ENCODE measurements at regions of chr14 and their contacts with region 1.

Region 1: GRCh38 chr14:92783816-92784431 is 10.2 kb upstream of the GOLGA5 start:
- DNase-seq: peak in 1 of 2 donors; percentile 44
- ATAC-seq: peak in 7 of 8 donors; percentile 35 to 78 (median 68)
- H3K4me3 ChIP-seq: no peak overlapping the region
- H3K27ac ChIP-seq: no peak overlapping the region
- H3K4me1 ChIP-seq: peaks cover 0 to 38% (median 12%) of the 10 kb centered on the region in 9 donors
- H3K27me3 ChIP-seq: no peaks in the 10 kb centered on the region
- CTCF ChIP-seq: peak; percentile 38 to 73 (median 58)

Region 2: DNA sequence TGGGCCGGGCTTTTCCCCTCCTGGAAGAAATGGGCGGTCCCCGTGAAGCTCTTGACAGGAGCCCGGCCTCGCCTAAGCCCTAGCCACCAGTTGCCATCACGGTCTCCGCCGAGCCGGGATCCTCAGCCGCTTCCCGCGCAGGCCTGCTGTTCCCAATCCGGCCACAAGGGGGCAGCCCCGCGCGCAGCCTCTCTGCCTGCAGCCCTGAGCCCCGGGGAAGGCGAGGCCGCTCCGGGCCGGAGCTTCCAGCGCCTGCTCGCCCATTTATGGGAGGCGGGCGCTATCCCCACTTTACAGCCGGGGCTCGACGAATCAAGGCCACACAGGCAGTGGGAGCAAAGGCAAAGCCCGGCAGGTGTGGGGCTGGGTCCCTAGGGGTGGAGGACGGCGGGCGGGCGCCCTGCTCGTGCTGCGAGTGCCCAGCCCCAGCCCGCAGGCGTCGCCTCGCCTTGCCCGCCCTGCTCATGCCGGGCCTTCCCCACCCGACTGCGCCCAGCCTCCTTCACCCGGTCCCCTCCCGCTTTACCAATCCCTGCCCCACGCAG is 97.0 kb before region 1 on chr14:
- intact Hi-C with region 1: loop called in 3 of 10 experiments (anchors 1 to 10 kb)
- DNase-seq: peak; percentile 66 to 81
- ATAC-seq: peak; percentile 79 to 90 (median 86)
- H3K4me3 ChIP-seq: peak overlapping the region in 9 of 10 donors; percentile 32 to 56 (median 47)
- H3K27ac ChIP-seq: no peak overlapping the region
- H3K4me1 ChIP-seq: peaks cover under 1 to 19% (median 7%) of the 10 kb centered on the region in 9 donors
- H3K27me3 ChIP-seq: no peaks in the 10 kb centered on the region
- CTCF ChIP-seq: peak; percentile 68 to 100 (median 98)

Region 3: DNA sequence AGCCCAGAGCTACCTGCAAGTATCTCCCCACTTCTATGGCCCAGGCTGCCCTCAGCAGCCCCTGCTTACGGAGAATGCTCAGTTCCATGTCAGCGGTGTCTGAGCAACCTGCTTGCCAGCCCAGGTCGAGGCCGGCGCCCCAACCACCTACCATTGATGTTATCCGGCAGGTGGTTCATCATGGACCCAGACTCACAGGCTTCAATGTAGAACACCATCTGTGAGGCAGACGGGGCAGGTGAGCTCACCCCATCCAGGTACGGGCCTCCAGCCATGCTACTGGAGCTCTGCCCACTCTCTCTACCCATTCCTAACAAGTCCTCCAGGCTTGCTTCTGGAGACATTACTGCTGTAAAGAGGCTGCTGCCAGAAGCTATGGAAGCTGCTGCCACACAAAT is 71.3 kb before region 1 on chr14:
- intact Hi-C with region 1: loop called (anchors 1 to 5 kb)
- DNase-seq: no peak
- ATAC-seq: no peak
- H3K4me3 ChIP-seq: no peak overlapping the region
- H3K27ac ChIP-seq: no peak overlapping the region
- H3K4me1 ChIP-seq: peaks cover 0 to 8% (median 2%) of the 10 kb centered on the region in 9 donors
- H3K27me3 ChIP-seq: no peaks in the 10 kb centered on the region
- CTCF ChIP-seq: no peak

Region 4: GRCh38 chr14:92719890-92720323 is 64.0 kb before region 1 on chr14:
- intact Hi-C with region 1: loop called in 3 of 10 experiments (anchors 2 kb)
- DNase-seq: no peak
- ATAC-seq: peak in 1 of 8 donors; percentile 53
- H3K4me3 ChIP-seq: no peak overlapping the region
- H3K27ac ChIP-seq: peak overlapping the region in 6 of 10 donors; percentile 3 to 44 (median 18)
- H3K4me1 ChIP-seq: peaks cover 0 to 41% (median 27%) of the 10 kb centered on the region in 9 donors
- H3K27me3 ChIP-seq: no peaks in the 10 kb centered on the region
- CTCF ChIP-seq: no peak

Region 5: DNA sequence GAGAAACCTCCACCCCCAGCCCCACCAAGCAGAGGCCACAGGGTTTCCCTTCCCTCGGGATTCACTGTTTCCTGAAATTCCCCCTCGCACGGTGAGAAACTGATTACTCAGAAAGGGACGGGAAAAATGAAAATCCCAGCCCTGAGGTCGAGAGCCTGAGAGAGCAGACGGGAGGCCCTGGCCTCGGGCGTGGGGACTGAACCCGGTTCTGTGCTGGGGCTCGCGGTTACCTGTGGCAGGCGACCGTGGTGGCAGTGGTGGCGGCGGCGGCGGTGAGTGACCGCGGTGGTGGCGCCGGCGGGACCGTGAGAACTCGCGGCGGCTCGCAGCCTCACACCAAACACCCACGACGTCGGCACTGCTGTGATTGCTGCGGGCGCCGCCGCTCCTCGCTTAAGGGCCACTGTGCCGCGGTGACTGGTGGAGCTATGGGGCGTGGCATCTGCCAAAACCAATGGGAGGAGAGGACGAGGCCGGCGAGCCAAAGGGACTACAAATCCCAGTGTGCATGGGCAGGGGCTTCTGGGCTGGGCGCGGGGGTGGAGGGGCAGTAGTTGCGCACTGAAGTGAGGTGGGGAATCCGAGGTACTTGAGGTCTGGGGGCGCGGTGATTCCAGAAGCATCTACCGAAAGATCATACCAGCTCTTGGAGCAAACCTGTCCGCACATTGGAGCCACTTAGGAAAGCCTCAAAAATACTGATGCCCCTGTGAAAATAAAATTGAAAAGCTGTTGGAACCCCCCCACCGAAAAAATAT is 35.5 kb before region 1 on chr14 and contains the start of gene LGMN:
- intact Hi-C with region 1: loop called in 1 of 10 experiments (anchors 5 kb)
- DNase-seq: peak; percentile 96 to 98
- ATAC-seq: peak; percentile 97 to 99 (median 98)
- H3K4me3 ChIP-seq: peak within 1 kb of the TSS; percentile 67 to 95 (median 76)
- H3K27ac ChIP-seq: peak within 1 kb of the TSS; percentile 26 to 92 (median 90)
- H3K4me1 ChIP-seq: peaks cover 10 to 69% (median 19%) of the 10 kb centered on the region in 9 donors
- H3K27me3 ChIP-seq: peaks cover 0 to 26% (median 0%) of the 10 kb centered on the region in 7 donors
- CTCF ChIP-seq: peak in 1 of 9 donors; percentile 6
- total RNA-seq, gene LGMN: 82.2 to 211 (median 103) TPM

Region 6: DNA sequence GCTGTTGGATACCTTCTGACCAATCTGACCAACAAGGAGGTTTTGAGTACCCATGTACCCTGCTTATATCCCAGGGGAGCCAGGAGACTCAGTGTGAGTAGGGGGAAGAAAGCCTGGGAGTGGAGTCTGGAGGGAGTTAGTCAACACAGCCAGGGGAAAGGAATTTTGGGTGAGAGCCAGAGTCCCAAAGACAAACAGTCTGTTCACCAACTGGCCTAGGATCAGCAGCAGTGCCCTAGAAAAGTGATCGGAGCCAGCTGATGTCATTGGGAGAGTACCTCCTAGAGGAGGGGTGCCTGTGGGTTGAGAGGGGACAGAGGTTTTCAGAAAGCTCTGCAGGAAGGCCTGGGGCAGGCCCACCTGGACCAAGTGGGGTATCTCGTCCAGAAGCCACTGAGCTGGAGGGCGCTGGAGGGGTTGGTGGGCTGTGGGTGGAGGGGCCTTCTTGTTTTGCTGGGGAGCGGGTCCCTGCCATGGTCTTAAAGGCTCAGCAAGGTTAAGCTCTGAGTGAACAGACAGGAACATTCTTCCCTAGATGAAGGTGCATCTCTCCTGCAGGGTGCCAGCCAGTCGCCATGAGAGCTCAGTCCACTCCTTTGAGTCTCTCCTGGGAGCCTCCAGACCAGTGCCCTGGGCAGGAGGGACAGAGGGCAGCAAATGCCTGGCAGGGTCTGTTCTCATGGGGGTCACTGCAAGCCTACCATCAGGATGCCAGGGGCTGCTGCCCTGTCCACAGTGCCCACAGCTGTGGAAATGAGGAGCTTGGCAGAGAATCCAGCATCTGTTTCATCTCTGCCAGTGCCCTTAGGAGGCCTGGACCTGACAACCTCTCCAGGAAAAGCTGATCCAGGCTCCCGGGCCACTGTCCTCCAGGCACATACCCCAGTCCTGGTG is 202.6 kb after region 1 on chr14:
- intact Hi-C with region 1: no loop called
- DNase-seq: peak; percentile 24 to 72
- ATAC-seq: peak; percentile 51 to 90 (median 84)
- H3K4me3 ChIP-seq: no peak overlapping the region
- H3K27ac ChIP-seq: peak overlapping the region; percentile 16 to 82 (median 76)
- H3K4me1 ChIP-seq: peaks cover 19 to 55% (median 34%) of the 10 kb centered on the region in 9 donors
- H3K27me3 ChIP-seq: no peaks in the 10 kb centered on the region
- CTCF ChIP-seq: no peak